BJ (cell line): ENCODE measurements at regions of chr19 and their contacts with region 1.

Region 1: GRCh38 chr19:18985257-18985656 is 44.2 kb upstream of the HOMER3 start:
- DNase-seq: no peak
- H3K4me3 ChIP-seq: no peak overlapping the region
- H3K27me3 ChIP-seq: no peaks in the 10 kb centered on the region; the same call in 1 of the 2 replicates
- CTCF ChIP-seq: no peak

Region 2: GRCh38 chr19:18875726-18876125 is 109.5 kb before region 1 on chr19:
- CTCF ChIA-PET with region 1: interaction called, 10 read pairs
- POLR2A ChIA-PET with region 1: no interaction called
- DNase-seq: peak; percentile 74
- H3K4me3 ChIP-seq: no peak overlapping the region
- H3K27me3 ChIP-seq: no peaks in the 10 kb centered on the region
- CTCF ChIP-seq: no peak

Region 3: GRCh38 chr19:18895038-18895823 is 90.0 kb before region 1 on chr19:
- CTCF ChIA-PET with region 1: interaction called, 33 read pairs
- POLR2A ChIA-PET with region 1: no interaction called
- DNase-seq: no peak
- H3K4me3 ChIP-seq: peak overlapping the region; percentile 42
- H3K27me3 ChIP-seq: peaks cover 7% of the 10 kb centered on the region
- CTCF ChIP-seq: peak; percentile 51

Region 4: DNA sequence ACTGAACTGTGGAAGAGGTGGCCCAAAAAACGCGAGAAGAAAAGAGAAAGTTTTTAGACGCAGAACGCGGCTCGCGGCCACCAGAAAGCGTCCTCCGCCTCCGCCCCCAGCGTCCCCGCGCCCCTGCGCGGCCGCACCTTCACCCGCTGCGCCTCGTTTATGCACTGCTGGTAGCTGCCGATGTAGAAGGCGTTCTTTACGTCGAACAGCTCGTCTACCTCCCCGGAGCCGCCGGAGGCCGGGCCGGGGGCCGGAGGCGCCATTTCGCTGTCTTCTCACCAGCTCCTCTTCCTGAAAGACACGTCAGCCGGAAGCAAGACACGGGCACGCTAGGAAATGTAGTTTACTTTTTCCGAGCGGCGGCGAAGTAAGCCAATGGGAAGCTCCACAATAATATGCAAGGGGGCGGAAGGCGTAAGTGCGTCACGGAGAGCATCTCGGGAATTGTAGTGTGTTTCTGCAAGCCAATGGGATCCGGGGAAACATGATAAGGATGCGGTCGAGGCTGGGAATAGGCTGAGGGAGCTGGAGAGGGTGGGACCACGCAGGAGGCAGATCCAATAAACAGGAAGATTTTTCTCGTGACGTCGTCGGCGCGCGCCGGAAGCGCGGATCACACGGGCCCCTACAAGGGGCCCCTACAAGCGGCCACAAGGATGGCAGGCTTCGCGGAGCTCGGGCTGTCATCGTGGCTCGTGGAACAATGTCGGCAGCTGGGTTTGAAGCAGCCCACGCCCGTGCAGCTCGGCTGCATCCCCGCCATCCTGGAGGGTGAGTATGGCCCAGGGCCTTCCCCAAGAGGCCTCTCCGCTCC is 66.0 kb before region 1 on chr19 and contains the starts of genes COPE and DDX49:
- CTCF ChIA-PET with region 1: interaction called, 11 read pairs
- POLR2A ChIA-PET with region 1: no interaction called
- DNase-seq: peak; percentile 100
- H3K4me3 ChIP-seq: peak within 1 kb of the TSS; percentile 99
- H3K27me3 ChIP-seq: no peaks in the 10 kb centered on the region
- CTCF ChIP-seq: 0 out of 2 replicates have a peak, but pooled peaks have one; percentile 11
- polyA plus RNA-seq, gene COPE: 161 and 309 TPM in 2 replicates
- polyA plus RNA-seq, gene DDX49: 45.0 and 70.0 TPM in 2 replicates

Region 5: GRCh38 chr19:18940769-18941407 is 44.4 kb before region 1 on chr19 and contains the start of gene HOMER3:
- CTCF ChIA-PET with region 1: interaction called, 12 read pairs
- POLR2A ChIA-PET with region 1: no interaction called
- DNase-seq: no peak
- H3K4me3 ChIP-seq: peak within 1 kb of the TSS; percentile 93
- H3K27me3 ChIP-seq: no peaks in the 10 kb centered on the region
- CTCF ChIP-seq: peak; percentile 47
- polyA plus RNA-seq, gene HOMER3: 44.7 and 55.3 TPM in 2 replicates

Region 6: GRCh38 chr19:18946918-18947536 is 38.2 kb before region 1 on chr19:
- CTCF ChIA-PET with region 1: interaction called, 12 read pairs
- POLR2A ChIA-PET with region 1: no interaction called
- DNase-seq: no peak
- H3K4me3 ChIP-seq: no peak overlapping the region
- H3K27me3 ChIP-seq: no peaks in the 10 kb centered on the region
- CTCF ChIP-seq: no peak

Region 7: GRCh38 chr19:18995804-18996241 is 10.6 kb after region 1 on chr19:
- CTCF ChIA-PET with region 1: interaction called, 44 read pairs
- POLR2A ChIA-PET with region 1: no interaction called
- DNase-seq: peak; percentile 50
- H3K4me3 ChIP-seq: no peak overlapping the region
- H3K27me3 ChIP-seq: no peaks in the 10 kb centered on the region
- CTCF ChIP-seq: peak; percentile 88